Testis (tissue), 5 donors: ENCODE measurements at regions of chr3 and their contacts with region 1.

Region 1: GRCh38 chr3:158859362-158859761 is 57.5 kb downstream of the MFSD1 start:
- DNase-seq: no peak
- H3K4me3 ChIP-seq: no peak overlapping the region
- H3K27ac ChIP-seq: no peak overlapping the region
- H3K4me1 ChIP-seq: no peaks in the 10 kb centered on the region
- H3K27me3 ChIP-seq: no peaks in the 10 kb centered on the region
- CTCF ChIP-seq: no peak
- POLR2A ChIP-seq: no peak

Region 2: DNA sequence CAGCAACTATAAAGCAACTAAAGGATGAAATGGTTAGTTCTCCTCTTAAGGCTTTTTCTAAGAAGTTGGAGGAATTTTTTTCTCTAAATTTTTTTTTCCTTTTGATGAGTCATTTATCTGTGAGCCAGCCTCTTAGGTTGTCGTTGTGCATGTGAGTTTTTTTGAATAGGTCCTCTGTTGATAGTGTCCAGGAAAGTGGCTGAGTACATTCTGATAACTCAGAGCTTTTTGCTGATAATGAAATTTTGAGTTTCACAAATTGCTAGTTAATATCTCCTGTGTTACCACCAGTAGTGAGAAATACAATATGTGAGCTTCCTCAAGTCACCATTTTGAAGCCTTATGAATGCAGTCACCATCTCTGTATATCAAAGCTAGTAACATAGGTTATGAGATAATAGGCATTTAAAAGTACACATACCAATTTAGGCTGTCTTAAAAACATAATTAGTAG is 179.8 kb before region 1 on chr3:
- intact Hi-C with region 1: no loop called
- DNase-seq: no peak
- H3K4me3 ChIP-seq: no peak overlapping the region
- H3K27ac ChIP-seq: no peak overlapping the region
- H3K4me1 ChIP-seq: no peaks in the 10 kb centered on the region
- H3K27me3 ChIP-seq: no peaks in the 10 kb centered on the region
- CTCF ChIP-seq: no peak
- POLR2A ChIP-seq: no peak

Region 3: DNA sequence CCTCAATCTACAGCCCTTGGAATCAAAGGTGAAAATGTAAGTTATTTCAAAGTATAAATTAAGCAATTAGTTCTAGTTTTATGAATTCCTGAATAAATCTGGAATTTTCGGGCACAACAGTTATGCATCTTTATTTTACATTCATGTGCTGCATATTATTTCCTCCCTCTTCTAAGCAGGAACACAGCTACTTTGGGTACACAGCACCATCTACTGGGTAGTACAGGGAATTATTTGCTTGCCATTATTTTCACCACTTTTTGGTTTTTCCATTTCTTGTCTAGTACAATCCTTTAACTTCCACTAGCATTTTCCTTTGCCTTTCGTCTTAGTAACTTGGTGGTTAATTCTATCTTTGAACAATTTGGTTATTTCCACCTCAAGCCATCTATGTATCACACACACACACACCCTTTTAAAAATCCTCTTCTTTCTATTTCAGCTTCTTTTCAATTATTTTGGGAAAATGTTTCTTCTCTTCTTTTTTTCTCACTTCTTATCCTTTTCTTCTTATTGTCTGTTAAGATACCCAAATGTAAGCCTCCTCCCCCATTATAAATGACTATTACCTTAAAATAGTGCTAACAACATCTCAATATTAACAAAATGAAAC is 393.5 kb after region 1 on chr3:
- intact Hi-C with region 1: loop called (anchors 10 kb)
- DNase-seq: no peak
- H3K4me3 ChIP-seq: no peak overlapping the region
- H3K27ac ChIP-seq: no peak overlapping the region
- H3K4me1 ChIP-seq: no peaks in the 10 kb centered on the region
- H3K27me3 ChIP-seq: no peaks in the 10 kb centered on the region
- CTCF ChIP-seq: peak in 2 of 3 experiments; percentile 52 to 55
- POLR2A ChIP-seq: no peak